ENCODE measurements at regions of chr1 and their contacts with region 1.

Region 1: GRCh38 chr1:64956733-64957441 is 9.5 kb downstream of the JAK1 start:
- DNase-seq: peak; percentile 43
- H3K4me3 Mint-ChIP-seq: no peak overlapping the region
- H3K27ac Mint-ChIP-seq: no peak overlapping the region
- H3K4me1 Mint-ChIP-seq: peaks cover 45% of the 10 kb centered on the region
- H3K27me3 Mint-ChIP-seq: no peaks in the 10 kb centered on the region

Region 2: GRCh38 chr1:64973061-64973647 is 16.3 kb after region 1 on chr1:
- CTCF ChIA-PET with region 1: interaction called, 12 read pairs
- POLR2A ChIA-PET with region 1: no interaction called
- DNase-seq: no peak
- H3K4me3 Mint-ChIP-seq: no peak overlapping the region
- H3K27ac Mint-ChIP-seq: no peak overlapping the region
- H3K4me1 Mint-ChIP-seq: peaks cover 1% of the 10 kb centered on the region
- H3K27me3 Mint-ChIP-seq: peaks cover 1% of the 10 kb centered on the region

Region 3: DNA sequence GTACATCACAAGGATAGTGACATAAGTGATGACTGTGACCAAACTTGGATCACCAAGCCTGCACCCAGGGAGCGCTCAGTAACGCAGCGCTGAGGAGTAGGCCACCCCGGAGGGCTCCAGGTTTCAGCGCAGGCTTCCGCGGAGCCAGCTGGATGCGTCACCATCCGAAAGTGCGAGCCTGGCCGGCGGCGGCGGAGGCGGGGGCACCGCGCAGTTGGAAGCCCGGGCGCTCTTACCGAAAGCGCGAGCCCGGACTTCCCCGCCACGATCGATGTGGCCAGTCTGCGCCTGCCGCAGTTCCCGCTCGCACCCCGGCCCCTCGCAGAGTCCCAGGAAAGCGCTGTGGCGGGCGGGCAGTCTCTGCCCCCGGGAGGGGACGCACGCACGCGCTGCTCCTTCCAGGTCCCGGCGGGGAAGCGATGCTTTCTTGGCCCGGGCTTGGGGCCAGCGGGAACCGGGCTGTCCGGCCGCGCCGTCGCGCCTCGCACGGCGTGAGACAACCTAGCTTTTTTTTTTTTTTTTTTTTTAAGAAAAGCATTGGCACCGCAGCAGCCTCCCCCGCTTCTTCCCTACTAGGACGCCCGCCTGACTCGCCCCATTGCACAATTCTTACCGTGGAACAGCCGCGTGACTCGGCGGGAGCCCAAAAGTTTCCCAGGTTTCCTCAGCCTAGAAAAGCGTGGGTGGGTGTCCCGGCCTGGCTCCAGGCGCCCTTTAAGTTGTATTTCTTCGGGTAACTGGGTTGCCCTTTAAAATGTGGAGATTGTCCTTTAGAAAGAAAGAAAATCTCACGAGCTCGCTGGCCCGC is 45.8 kb after region 1 on chr1:
- CTCF ChIA-PET with region 1: no interaction called
- POLR2A ChIA-PET with region 1: interaction called, 14 read pairs
- DNase-seq: peak; percentile 73
- H3K4me3 Mint-ChIP-seq: peak overlapping the region; percentile 79
- H3K27ac Mint-ChIP-seq: no peak overlapping the region
- H3K4me1 Mint-ChIP-seq: peaks cover 26% of the 10 kb centered on the region
- H3K27me3 Mint-ChIP-seq: peaks cover 24% of the 10 kb centered on the region